CD14-positive monocyte (primary cell): ENCODE measurements at regions of chr14 and their contacts with region 1.

Region 1: DNA sequence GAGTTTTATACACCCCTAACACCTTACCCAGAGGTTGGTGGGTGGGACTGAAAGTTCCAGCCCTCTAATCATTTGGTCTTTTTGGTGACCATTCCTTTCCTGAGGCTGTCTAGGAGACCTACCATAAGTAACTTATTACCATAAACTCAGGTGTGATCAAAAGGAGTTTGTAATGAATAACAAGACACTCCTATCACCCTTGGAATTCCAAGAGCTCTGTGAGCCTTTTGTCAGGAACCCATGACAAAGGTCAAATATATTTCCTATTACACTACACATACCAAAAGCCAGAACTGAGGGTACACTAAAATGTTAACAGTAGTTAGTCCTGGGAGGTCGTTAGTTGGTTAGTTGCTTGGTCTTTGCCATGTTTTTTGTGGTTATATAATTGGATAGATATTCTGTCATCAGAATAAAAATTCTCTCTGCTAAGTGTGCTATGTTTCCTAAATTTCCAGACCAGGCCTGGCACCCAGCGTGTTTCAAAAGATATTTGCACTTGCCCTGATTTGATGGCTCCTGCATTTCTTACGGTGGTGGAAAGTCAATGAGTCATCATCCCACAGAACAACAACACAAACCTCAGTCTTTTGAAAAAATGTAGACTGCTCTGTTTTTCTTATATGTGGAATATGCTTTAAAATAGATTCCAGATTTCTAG is 27.0 kb upstream of the AKAP5 start:
- DNase-seq: no peak
- H3K4me3 ChIP-seq: no peak overlapping the region
- H3K4me3 Mint-ChIP-seq: no peak overlapping the region
- H3K27ac ChIP-seq: no peak overlapping the region
- H3K27ac Mint-ChIP-seq: peak overlapping the region in 1 of 7 donors; percentile 41
- H3K4me1 ChIP-seq: no peaks in the 10 kb centered on the region
- H3K4me1 Mint-ChIP-seq: no peaks in the 10 kb centered on the region
- H3K27me3 ChIP-seq: no peaks in the 10 kb centered on the region
- H3K27me3 Mint-ChIP-seq: no peaks in the 10 kb centered on the region
- CTCF ChIP-seq: no peak

Region 2: DNA sequence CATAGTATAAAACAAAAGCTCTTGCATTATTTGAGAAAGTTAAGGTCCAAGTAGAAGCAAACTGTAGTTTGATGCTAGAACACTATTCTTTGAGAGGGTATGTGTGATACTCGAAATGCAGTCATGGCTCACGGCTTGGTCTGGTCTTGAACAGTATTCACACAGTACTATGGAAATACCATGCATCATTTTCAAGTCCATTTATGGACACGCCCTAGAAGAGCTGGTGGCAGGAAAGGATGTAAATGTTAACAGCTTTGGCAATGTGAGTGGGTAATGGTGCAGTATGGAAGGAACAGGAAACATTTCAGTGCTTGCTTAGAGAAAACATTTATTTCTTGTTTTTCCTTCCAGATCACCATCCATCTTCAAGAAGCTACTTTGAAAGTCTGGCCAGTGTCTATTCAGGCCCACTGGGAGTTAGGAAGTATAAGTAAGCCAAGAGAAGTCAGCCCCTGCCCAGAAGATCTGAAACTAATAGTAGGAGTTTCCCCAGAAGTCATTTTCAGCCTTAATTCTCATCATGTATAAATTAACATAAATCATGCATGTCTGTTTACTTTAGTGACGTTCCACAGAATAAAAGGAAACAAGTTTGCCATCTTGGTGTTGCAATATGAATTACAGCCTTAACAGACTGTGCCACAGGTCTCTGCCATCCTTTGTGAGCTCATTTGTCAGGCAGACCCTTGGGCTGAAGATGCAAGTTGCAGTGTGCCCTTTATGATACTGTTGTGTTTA is 21.3 kb after region 1 on chr14:
- intact Hi-C with region 1: no loop called
- DNase-seq: no peak
- H3K4me3 ChIP-seq: no peak overlapping the region
- H3K4me3 Mint-ChIP-seq: no peak overlapping the region
- H3K27ac ChIP-seq: no peak overlapping the region
- H3K27ac Mint-ChIP-seq: peak overlapping the region in 3 of 7 donors; percentile 12 to 43 (median 18)
- H3K4me1 ChIP-seq: peaks cover 11 to 12% of the 10 kb centered on the region in 2 donors
- H3K4me1 Mint-ChIP-seq: peaks cover 18% of the 10 kb centered on the region
- H3K27me3 ChIP-seq: peaks cover 6 to 9% of the 10 kb centered on the region in 2 donors
- H3K27me3 Mint-ChIP-seq: peaks cover 8 to 13% (median 10%) of the 10 kb centered on the region in 3 donors
- CTCF ChIP-seq: no peak

Region 3: DNA sequence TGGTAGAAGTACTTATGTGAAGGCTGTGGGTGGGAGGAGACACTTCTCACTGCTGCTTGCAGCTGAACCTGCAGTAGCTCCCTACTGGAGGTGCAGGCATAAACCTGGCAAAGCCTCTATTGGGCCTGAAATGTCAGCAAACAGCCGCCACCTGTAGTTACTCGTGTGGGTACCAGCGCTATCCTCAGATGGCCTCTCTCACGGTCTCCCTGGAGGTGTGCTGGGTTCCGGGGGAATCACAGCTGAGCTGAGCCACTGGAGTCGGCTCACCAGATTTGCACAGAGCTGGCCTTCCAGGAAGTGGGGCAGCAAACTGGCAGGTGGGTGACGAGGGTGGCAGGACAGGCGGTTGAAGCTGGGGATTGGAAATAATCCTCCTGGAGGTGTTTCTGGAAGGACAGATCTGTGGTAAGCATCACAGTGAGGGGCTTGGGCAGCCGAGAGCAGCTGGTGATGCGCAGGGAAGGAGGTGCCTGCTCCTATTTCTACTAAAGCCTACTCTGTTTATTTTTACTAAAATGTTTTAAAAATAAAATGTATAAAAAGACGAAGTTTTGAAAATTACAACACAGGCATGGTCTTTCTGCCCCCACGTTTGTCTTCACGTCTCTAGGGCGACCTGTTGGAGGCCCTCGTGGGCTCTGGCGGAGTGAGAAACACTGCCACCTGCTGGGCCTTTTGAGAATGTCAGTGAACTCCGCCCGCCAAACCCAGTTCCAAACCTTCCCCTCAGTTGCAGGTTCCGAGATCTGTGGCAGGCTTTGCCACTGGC is 198.1 kb after region 1 on chr14:
- intact Hi-C with region 1: loop called in 1 of 2 experiments (anchors 10 kb)
- DNase-seq: peak; percentile 49 to 66 (median 64)
- H3K4me3 ChIP-seq: no peak overlapping the region
- H3K4me3 Mint-ChIP-seq: no peak overlapping the region
- H3K27ac ChIP-seq: no peak overlapping the region
- H3K27ac Mint-ChIP-seq: no peak overlapping the region
- H3K4me1 ChIP-seq: peaks cover 14% of the 10 kb centered on the region in 2 donors
- H3K4me1 Mint-ChIP-seq: peaks cover 16% of the 10 kb centered on the region
- H3K27me3 ChIP-seq: no peaks in the 10 kb centered on the region
- H3K27me3 Mint-ChIP-seq: peaks cover 0 to 4% (median 2%) of the 10 kb centered on the region in 3 donors
- CTCF ChIP-seq: peak; percentile 96